ENCODE measurements at regions of chr6 and their contacts with region 1.

Region 1: GRCh38 chr6:53734473-53735299 is 60.1 kb upstream of the LRRC1 start:
- DNase-seq: peak; percentile 29 to 78
- H3K4me3 ChIP-seq: no peak overlapping the region
- H3K27ac ChIP-seq: no peak overlapping the region
- H3K4me1 ChIP-seq: peaks cover 0 to 3% (median 0%) of the 10 kb centered on the region in 4 experiments; a peak in 1 of 7 replicates
- H3K27me3 ChIP-seq: no peaks in the 10 kb centered on the region
- CTCF ChIP-seq: peak; percentile 70 to 87 (median 79)
- EP300 ChIP-seq: no peak
- POLR2A ChIP-seq: no peak
- RAD21 ChIP-seq: peak; percentile 55 to 63

Region 2: DNA sequence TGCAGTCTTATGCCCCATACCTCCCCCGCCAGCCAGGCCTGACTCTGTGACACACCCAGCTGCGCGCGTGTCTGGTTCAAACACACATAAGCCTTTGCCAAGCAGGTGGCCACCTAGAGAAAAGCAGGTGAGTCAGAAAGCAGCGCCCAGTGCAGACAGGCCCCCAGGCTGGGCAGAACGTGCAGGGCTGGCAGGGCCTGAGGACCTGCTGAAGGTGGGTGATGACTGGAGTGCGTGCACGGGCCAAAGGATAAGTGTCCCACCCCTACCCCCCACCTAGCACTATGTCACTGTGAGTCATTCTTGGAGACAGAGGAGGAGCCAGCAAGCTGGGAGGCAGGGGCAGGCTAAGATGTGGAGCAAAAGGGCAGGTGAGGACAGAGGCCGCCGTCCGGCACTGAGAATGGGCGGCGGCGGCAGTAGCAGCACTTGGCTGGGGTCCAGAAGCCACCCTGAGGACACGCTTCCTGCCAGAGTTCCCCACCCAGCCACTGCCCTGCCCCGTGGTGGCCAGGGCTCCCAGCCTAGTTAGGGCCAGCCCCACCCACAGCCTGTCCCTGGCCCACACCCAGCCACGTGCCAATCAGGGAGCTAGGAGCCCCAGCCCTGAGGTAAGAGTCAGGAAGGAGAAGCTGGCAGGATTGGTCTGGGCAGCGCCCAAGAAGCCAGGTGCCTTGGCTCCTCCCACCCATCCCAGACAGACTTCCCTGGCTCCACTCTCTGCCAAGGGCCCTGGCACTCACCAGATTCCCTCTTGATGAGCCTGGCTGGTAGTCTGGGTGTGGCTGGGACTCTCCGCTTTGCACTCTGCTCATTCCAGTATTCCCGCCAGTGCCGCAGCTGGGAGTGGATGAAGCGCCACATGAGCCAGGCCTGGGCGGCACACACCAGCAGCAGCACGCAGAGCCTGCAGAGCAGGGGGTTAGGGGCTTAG is 1230.6 kb before region 1 on chr6:
- CTCF ChIA-PET with region 1: no interaction called
- POLR2A ChIA-PET with region 1: no interaction called
- DNase-seq: no peak
- H3K4me3 ChIP-seq: no peak overlapping the region
- H3K27ac ChIP-seq: no peak overlapping the region; the same call in 1 of the 2 replicates
- H3K4me1 ChIP-seq: peaks cover 0 to 5% (median 2%) of the 10 kb centered on the region in 4 experiments; a peak in 4 of 7 replicates
- H3K27me3 ChIP-seq: no peaks in the 10 kb centered on the region
- CTCF ChIP-seq: no peak
- EP300 ChIP-seq: no peak
- POLR2A ChIP-seq: no peak
- RAD21 ChIP-seq: no peak

Region 3: DNA sequence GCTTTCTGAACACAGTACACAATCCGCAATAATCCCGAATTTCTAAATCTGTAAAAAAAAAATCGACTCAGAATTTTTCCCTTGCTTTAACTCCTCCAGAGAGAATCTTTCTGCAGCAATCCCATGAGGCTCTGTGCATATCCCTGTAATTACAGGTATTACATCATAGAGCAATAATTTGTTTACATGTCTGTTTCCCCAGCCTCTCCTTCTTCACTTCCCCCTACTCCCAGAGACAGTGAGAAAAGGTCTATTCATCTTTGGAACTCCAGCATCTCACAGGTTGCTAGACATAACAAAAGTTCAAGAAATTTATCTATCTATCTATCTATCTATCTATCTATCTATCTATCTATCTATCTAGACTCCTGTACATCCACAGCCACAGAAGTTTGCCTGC is 95.2 kb before region 1 on chr6:
- CTCF ChIA-PET with region 1: no interaction called
- POLR2A ChIA-PET with region 1: no interaction called
- DNase-seq: no peak
- H3K4me3 ChIP-seq: no peak overlapping the region
- H3K27ac ChIP-seq: no peak overlapping the region
- H3K4me1 ChIP-seq: no peaks in the 10 kb centered on the region
- H3K27me3 ChIP-seq: no peaks in the 10 kb centered on the region
- CTCF ChIP-seq: no peak
- EP300 ChIP-seq: no peak
- POLR2A ChIP-seq: no peak
- RAD21 ChIP-seq: no peak

Region 4: GRCh38 chr6:53718597-53719460 is 15.9 kb before region 1 on chr6:
- CTCF ChIA-PET with region 1: interaction called, 132 read pairs
- POLR2A ChIA-PET with region 1: no interaction called
- DNase-seq: no peak
- H3K4me3 ChIP-seq: no peak overlapping the region
- H3K27ac ChIP-seq: no peak overlapping the region
- H3K4me1 ChIP-seq: no peaks in the 10 kb centered on the region
- H3K27me3 ChIP-seq: no peaks in the 10 kb centered on the region
- CTCF ChIP-seq: peak in 2 of 3 experiments; percentile 72 to 85; a peak in 3 of 4 replicates
- EP300 ChIP-seq: no peak
- POLR2A ChIP-seq: no peak
- RAD21 ChIP-seq: peak; percentile 66 to 69

Region 5: DNA sequence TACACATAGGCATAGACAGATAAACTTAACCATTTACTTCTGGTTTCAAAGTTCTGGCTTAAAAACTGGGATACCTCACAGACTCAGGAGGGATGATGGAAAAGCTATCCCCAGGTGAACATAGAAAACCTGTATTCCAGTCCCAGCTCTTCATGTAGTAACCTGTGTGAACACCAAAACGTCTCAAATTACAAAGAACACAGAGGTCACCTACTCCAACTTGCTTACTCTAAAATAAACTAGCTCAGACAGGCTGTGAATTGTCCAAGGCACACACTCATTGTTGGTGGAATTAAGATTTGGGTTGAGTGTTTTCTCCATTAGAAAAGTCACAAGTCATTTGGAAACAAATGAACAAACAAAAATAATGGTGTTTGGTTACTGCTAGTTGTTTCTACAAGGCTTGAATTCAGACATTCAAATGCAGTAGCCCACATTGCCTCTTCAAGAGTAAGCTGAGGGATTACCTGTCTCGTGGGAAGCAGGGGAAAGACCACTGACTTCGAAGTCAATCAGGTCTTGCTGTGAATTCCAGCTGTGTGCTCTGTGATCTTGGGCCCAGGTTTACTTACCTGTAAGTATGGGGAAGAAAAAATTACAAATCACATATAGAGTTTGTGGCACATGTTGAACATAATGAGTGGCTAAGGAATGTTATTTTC is 11.9 kb after region 1 on chr6:
- CTCF ChIA-PET with region 1: interaction called, 21 read pairs
- POLR2A ChIA-PET with region 1: no interaction called
- DNase-seq: no peak
- H3K4me3 ChIP-seq: no peak overlapping the region
- H3K27ac ChIP-seq: no peak overlapping the region
- H3K4me1 ChIP-seq: no peaks in the 10 kb centered on the region; a peak in 1 of 7 replicates
- H3K27me3 ChIP-seq: no peaks in the 10 kb centered on the region
- CTCF ChIP-seq: no peak
- EP300 ChIP-seq: no peak
- POLR2A ChIP-seq: no peak
- RAD21 ChIP-seq: no peak

Region 6: GRCh38 chr6:53752856-53753255 is 18.2 kb after region 1 on chr6:
- CTCF ChIA-PET with region 1: interaction called, 17 read pairs
- POLR2A ChIA-PET with region 1: no interaction called
- DNase-seq: no peak
- H3K4me3 ChIP-seq: no peak overlapping the region
- H3K27ac ChIP-seq: no peak overlapping the region
- H3K4me1 ChIP-seq: no peaks in the 10 kb centered on the region
- H3K27me3 ChIP-seq: no peaks in the 10 kb centered on the region
- CTCF ChIP-seq: no peak
- EP300 ChIP-seq: no peak
- POLR2A ChIP-seq: no peak
- RAD21 ChIP-seq: no peak

Region 7: DNA sequence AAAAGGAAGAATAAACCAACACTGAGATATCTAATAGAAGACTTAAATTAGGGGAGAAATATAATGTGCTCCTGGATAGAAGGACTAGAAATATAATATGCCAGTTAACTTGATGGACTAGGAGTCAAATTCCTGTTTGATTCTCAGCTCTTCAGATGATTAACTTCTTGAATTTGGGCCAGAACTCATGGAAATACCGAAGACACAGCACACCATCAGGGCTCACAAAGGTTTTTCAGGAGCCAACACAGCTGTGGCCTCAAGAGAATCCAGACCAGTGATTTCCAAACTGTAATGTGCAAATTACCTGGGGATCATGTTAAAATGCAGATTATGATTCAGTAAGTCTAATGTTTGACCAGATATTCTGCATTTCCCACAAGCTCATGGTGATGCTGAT is 26.4 kb after region 1 on chr6:
- CTCF ChIA-PET with region 1: interaction called, 15 read pairs
- POLR2A ChIA-PET with region 1: no interaction called
- DNase-seq: no peak
- H3K4me3 ChIP-seq: no peak overlapping the region
- H3K27ac ChIP-seq: no peak overlapping the region
- H3K4me1 ChIP-seq: no peaks in the 10 kb centered on the region
- H3K27me3 ChIP-seq: no peaks in the 10 kb centered on the region
- CTCF ChIP-seq: no peak
- EP300 ChIP-seq: no peak
- POLR2A ChIP-seq: no peak
- RAD21 ChIP-seq: no peak

Region 8: DNA sequence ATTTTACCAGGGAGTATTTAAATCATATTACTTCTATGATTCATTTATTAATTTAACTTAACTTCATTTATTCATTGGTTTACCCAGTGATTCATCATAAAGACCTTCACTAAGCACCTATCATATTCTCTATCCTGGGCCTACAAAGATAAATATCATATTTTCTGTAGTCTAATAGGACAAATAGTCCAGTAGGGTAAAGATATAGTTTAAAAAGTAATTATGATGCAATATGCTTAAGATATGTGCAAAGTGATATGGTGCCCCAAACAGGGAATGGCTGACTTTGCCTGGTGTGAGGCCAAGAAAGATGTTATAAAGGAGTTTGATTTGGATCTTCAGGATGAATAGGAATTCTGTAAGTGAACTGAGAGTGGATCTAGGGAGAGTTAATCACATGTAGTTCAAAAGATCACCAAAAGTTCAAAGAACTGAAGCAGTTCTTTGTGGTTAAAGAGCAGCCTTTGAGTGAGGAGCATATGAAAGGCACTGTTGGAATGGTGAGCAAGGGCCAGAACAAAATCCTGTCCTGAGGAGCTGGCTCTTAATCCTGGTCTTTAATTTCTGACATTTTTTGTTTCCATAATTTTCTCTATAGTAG is 422.1 kb after region 1 on chr6:
- CTCF ChIA-PET with region 1: no interaction called
- POLR2A ChIA-PET with region 1: no interaction called
- DNase-seq: no peak
- H3K4me3 ChIP-seq: no peak overlapping the region
- H3K27ac ChIP-seq: no peak overlapping the region
- H3K4me1 ChIP-seq: no peaks in the 10 kb centered on the region
- H3K27me3 ChIP-seq: no peaks in the 10 kb centered on the region
- CTCF ChIP-seq: no peak
- EP300 ChIP-seq: no peak
- POLR2A ChIP-seq: no peak
- RAD21 ChIP-seq: no peak

Measured in H1 (cell line).